MCF 10A (cell line): ENCODE measurements at regions of chr20 and their contacts with region 1.

Region 1: DNA sequence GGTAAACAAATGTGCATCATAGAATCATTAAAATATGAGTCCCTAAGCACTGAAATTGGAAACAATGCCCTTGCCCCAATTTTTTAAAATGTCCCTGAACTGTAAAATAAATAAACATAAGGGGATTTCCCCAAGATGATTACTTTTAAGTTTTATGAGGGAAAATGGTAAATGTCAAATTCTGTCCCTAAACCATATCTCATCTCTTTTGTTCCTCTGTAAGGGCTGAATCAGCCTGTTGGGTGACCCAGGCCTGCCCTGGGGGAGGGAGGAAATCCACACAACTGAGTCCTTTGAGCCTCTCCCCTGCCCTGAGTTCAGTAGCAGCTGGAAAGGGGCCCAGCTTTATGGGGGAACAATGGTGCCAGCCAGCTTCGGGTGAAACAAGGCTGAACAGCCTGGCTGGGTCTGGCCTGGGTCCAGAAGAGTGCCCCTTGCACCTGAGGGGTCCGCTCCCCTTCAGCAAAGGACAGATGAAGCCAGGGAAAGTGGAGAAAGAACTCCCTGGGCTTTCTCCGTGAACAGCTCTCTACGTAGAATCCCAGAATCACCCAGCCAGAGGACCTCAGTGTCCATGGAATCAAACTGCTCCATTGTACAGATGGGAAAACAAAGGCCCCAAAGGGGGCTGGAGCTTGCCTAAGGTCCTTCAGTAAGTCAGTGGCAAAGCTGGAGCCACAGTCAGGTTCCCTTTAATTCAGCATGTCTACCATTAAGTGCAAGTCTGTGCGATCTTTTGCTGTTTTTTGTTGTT is 28.2 kb upstream of the ITCH start:
- DNase-seq: peak; percentile 42
- H3K4me3 Mint-ChIP-seq: no peak overlapping the region
- H3K27ac Mint-ChIP-seq: peak overlapping the region; percentile 85
- H3K4me1 Mint-ChIP-seq: peaks cover 15% of the 10 kb centered on the region
- H3K27me3 Mint-ChIP-seq: no peaks in the 10 kb centered on the region
- CTCF ChIP-seq: no peak

Region 2: DNA sequence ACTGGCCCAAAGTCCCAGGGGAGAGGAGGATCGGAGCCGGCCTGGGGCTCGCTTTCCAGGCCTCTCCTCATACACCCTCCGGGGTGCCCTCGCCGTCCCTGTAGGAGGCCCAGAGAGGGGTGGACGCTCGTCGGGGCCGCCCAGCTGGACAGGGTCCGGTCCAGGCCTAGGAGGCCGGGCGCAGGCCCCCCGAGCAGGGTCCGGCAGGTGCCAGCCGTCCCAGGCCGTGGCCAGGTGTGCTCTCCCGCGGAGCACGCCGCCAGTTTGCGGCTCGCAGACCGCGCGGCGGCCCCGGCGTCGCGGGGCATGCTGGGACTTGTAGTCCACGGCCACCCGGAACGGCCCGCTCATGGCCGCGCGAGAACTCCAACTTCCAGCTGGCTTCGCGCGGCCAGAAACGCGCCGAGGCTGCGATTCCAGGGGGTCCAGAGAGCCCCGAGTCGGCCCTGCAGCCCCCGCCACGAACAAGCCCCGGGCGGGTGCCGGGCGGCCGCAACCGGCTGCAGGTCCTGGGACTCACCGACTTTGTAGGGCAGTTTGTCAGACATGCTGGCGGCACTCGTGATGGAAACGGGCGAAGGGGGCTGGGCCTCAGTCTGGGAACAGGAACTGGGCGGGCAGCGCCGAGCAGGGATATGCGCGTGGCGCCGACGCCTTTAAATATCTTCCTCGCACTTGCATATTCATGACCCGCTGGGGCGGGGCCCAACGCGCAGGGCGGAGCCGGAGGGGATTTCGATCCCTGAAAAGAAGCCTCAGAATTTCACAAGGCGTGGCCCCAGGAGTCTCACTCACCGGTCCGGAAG is 31.9 kb before region 1 on chr20 and contains the start of gene AHCY:
- CTCF ChIA-PET with region 1: interaction called, 3 read pairs
- POLR2A ChIA-PET with region 1: interaction called, 25 read pairs
- intact Hi-C with region 1: no loop called
- DNase-seq: peak; percentile 98
- H3K4me3 Mint-ChIP-seq: no peak within 1 kb of the TSS
- H3K27ac Mint-ChIP-seq: peak within 1 kb of the TSS; percentile 83
- H3K4me1 Mint-ChIP-seq: no peaks in the 10 kb centered on the region
- H3K27me3 Mint-ChIP-seq: no peaks in the 10 kb centered on the region
- CTCF ChIP-seq: no peak
- total RNA-seq, gene AHCY: 101 and 175 TPM in 2 replicates

Region 3: DNA sequence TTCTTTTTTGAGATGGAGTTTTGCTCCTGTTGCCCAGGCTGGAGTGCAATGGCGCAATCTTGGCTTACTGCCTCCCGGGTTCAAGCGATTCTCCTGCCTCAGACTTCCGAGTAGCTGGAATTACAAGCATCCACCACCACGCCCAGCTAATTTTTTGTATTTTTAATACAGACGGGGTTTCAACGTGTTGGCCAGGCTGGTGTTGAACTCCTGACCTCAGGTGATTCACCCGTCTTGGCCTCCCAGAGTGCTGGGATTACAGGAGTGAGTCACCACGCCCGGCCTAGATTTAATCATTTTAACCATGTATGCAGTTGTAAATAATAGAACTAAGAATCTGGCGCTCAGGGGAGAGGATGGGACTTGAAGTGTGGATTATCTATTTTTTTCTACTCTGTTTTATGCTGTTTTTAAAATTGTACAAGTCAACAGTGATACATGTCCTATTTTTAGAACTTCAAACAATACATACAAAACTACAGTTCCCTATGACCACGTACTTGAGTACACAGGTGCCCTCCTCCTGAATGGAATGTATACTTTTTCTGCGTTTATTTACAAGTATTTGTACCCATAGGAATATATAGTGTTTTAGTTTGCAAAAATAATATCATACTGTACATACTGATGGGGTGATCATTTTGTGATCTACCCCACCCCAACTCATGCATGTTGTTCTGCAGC is 56.1 kb after region 1 on chr20:
- CTCF ChIA-PET with region 1: interaction called, 3 read pairs
- POLR2A ChIA-PET with region 1: interaction called, 11 read pairs
- intact Hi-C with region 1: no loop called
- DNase-seq: peak; percentile 95
- H3K4me3 Mint-ChIP-seq: no peak overlapping the region
- H3K27ac Mint-ChIP-seq: peak overlapping the region; percentile 55
- H3K4me1 Mint-ChIP-seq: peaks cover 23% of the 10 kb centered on the region
- H3K27me3 Mint-ChIP-seq: no peaks in the 10 kb centered on the region
- CTCF ChIP-seq: no peak

Region 4: DNA sequence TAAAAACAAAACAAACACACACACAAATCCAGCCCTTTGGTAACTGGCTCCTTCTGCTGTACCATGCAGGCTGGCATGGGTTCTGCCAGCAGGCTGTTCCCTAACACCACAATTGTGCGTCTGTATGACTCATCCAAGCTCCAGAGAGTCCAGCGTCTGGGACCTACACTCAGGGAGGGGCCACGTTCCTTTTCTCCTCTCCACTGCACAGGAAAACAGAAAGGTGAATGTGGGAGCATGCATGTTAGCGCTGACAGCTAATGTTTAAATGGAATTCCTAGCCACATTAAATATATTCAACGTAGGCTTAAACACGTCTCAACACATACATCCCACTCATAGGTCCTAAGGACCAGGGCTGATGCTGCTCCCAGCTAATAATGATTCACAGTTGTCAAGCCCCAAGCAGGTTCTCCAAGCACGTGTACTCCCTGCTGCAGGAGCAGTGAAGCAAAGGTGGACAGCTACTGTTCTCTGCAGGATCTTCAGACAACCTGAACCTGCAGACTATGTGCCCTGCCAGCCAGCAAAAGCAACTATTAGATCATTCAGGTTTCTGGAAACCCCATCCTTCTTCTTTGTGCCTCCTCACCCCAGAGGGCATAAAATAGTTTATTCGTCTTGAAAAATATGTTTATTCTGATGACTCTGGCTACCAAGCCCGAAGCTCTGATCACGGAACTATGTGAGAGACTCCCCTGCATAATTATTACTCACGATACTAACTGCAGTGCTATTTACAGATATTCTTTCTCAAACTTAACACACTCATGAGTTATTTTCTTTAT is 244.6 kb after region 1 on chr20:
- CTCF ChIA-PET with region 1: no interaction called
- POLR2A ChIA-PET with region 1: no interaction called
- intact Hi-C with region 1: no loop called
- DNase-seq: peak; percentile 88
- H3K4me3 Mint-ChIP-seq: peak overlapping the region; percentile 11
- H3K27ac Mint-ChIP-seq: no peak overlapping the region
- H3K4me1 Mint-ChIP-seq: no peaks in the 10 kb centered on the region
- H3K27me3 Mint-ChIP-seq: no peaks in the 10 kb centered on the region
- CTCF ChIP-seq: peak; percentile 87